SK-N-SH (cell line): ENCODE measurements at regions of chrX and their contacts with region 1.

Region 1: GRCh38 chrX:50100188-50100587 is 100.6 kb downstream of the AKAP4 start:
- DNase-seq: peak; percentile 35
- H3K4me3 ChIP-seq: no peak overlapping the region
- H3K27ac ChIP-seq: no peak overlapping the region
- H3K4me1 ChIP-seq: peaks cover 0 to 3% of the 10 kb centered on the region in 2 experiments; a peak in 2 of 4 replicates
- H3K27me3 ChIP-seq: no peaks in the 10 kb centered on the region
- CTCF ChIP-seq: peak; percentile 54
- EP300 ChIP-seq: no peak
- RAD21 ChIP-seq: peak; percentile 76

Region 2: DNA sequence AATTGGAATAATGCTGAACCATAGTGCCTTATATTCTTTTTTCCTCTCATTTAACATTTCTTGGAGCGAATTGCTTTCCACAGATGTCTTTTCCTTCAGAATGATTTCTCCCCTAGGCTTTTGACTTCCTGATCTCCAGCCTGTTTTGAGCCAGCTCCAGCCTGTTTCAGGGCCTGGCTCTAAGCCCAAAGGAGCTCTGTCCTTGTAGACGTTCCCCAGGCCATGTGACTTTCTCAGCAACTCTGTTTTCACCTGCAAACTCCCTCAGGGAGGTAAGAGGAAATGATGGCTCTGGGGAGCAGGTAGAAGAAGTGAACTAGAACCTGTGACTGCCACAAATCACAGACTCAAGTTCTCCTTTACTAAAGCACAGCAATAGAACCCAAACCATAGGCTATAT is 11.6 kb after region 1 on chrX:
- CTCF ChIA-PET with region 1: no interaction called
- POLR2A ChIA-PET with region 1: no interaction called
- DNase-seq: no peak
- H3K4me3 ChIP-seq: no peak overlapping the region
- H3K27ac ChIP-seq: no peak overlapping the region
- H3K4me1 ChIP-seq: no peaks in the 10 kb centered on the region
- H3K27me3 ChIP-seq: peaks cover 7% of the 10 kb centered on the region; the same call in 1 of the 2 replicates
- CTCF ChIP-seq: no peak
- EP300 ChIP-seq: no peak
- RAD21 ChIP-seq: no peak

Region 3: DNA sequence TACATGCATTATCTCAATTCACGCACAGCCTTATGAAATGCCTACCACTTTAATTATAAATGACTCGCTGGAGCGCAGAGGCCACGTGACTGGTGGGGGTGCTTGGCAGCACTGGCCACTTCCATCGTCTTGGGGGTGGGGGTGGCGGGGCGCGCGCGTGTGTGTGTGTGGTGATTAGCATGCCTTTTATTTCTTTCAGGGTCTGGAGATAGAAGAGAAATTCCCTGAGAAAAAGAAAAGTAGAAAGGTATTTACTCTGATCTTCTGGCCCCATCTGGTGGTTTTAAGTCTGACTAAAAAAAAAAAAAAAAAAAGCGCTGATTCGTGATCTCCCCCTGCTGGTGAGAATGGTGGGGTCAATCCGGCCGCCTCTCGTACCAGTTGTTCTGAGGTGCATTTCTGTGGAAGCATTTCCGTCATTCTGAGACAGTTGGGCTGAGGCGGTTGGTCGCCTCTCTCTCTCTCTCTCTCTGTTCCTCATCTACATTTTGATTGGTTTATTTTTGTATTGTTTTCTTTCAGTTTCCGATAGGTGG is 104.2 kb after region 1 on chrX and contains the start of gene CCNB3:
- CTCF ChIA-PET with region 1: interaction called, 34 read pairs
- POLR2A ChIA-PET with region 1: no interaction called
- DNase-seq: peak; percentile 77
- H3K4me3 ChIP-seq: peak within 1 kb of the TSS; percentile 23 to 63
- H3K27ac ChIP-seq: peak within 1 kb of the TSS in 1 of 2 experiments; percentile 56; a peak in 2 of 4 replicates
- H3K4me1 ChIP-seq: peaks cover 2 to 5% of the 10 kb centered on the region in 2 experiments; a peak in 1 of 4 replicates
- H3K27me3 ChIP-seq: peaks cover 5% of the 10 kb centered on the region; the same call in 1 of the 2 replicates
- CTCF ChIP-seq: peak; percentile 87
- EP300 ChIP-seq: no peak
- RAD21 ChIP-seq: peak; percentile 64
- polyA plus RNA-seq, gene CCNB3: 0.28 and 1.8 TPM in 2 replicates

Region 4: DNA sequence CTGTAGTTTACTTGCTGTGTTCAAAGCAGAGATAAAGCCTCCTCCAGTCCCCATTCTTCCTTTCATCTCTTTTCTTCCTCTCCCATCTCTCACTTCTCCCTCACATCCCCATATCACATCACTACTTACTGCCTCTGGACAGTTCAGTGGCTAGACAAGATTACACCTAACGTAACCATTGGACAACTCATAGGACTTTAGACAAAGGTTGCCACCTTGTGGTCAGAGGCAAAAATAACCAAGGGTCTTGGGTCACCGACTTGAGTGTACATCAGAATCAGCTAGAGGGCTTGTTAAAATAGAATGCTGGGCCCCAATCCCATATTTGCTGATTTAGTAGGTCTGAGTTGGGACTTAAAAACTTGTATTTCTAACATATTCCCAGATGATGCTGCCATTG is 479.8 kb after region 1 on chrX:
- CTCF ChIA-PET with region 1: interaction called, 30 read pairs
- POLR2A ChIA-PET with region 1: no interaction called
- DNase-seq: peak; percentile 40
- H3K4me3 ChIP-seq: no peak overlapping the region
- H3K27ac ChIP-seq: no peak overlapping the region
- H3K4me1 ChIP-seq: no peaks in the 10 kb centered on the region
- H3K27me3 ChIP-seq: no peaks in the 10 kb centered on the region; the same call in 1 of the 2 replicates
- CTCF ChIP-seq: peak; percentile 74
- EP300 ChIP-seq: no peak
- RAD21 ChIP-seq: peak; percentile 82

Region 5: GRCh38 chrX:50586407-50586806 is 486.2 kb after region 1 on chrX:
- CTCF ChIA-PET with region 1: interaction called, 24 read pairs
- POLR2A ChIA-PET with region 1: no interaction called
- DNase-seq: no peak
- H3K4me3 ChIP-seq: no peak overlapping the region
- H3K27ac ChIP-seq: peak overlapping the region in 1 of 2 experiments; percentile 53; a peak in 2 of 4 replicates
- H3K4me1 ChIP-seq: peaks cover 0 to 5% of the 10 kb centered on the region in 2 experiments; a peak in 2 of 4 replicates
- H3K27me3 ChIP-seq: no peaks in the 10 kb centered on the region
- CTCF ChIP-seq: no peak
- EP300 ChIP-seq: no peak
- RAD21 ChIP-seq: no peak